ENCODE measurements at regions of chr12 and their contacts with region 1.

Region 1: DNA sequence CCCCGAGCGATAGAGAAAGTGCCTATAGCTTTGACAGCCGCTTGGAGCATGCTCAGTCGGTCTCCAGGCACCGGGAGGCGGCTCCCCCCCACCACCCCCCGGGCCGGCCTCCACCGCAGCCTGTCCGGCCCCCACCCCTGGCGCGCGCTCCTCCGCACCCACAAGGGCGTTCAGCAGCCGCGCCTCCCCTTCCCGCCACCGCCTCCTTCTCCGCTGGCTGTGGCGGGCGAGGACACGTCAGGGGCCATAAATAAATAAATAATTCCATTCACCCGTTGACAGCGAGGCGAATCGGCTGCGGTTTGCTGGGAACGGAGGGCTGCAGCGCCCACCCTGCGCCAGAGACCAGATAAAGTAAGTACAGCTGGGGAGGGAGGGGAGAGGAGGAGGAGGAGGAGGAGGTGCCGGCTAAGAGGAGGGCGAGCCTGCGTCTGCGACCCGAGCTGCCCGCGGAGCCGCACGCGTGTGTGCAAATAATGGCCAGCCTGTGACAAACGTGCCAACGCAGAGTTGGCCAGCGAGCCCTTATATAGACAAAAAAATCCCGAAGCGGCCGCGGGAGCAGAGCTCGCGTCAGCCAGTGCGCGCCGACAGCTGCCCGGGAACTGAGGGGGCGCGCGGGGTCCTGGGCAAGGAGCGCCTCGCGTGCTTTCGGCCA is at the start of gene SLC16A7:
- DNase-seq: peak; percentile 94
- total RNA-seq, gene SLC16A7: 90.1 TPM

Region 2: GRCh38 chr12:59548930-59549329 is 47.1 kb before region 1 on chr12:
- intact Hi-C with region 1: no loop called
- DNase-seq: no peak

Region 3: DNA sequence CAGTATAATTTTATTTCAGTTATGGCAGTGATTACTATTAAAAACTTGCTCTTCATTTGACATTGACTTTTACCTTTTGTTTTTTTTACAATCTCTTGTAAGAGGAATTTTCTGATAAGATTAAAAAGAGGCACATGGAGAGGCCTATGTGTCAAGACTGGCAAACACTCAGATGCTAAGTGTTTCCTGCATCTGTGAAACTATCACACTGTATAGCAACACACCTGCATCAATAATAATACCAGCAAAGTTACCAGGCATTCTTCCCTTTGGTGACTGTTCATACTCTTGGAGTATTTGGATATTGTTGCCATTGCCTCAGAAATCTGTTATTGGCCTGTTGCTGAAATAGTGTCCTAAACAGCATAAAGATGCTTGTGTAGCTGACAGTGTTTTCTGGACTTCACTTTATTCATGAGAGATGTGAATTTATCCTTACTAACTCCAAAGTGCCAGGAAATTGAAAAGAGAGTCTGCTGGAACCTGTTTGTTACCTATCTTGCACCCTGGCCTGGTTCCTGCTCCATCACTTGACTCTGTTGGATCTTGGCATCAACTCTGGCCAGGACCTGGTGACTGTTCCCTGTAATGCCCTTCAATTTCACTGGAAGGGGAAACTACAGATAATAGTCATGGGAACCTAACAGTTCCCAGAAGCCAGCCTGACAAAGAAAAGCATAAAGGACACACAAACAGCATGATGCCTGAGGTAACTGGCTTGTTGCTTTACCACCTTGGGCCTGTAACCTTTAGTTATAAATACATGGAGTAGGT is 19.6 kb after region 1 on chr12:
- intact Hi-C with region 1: loop called (anchors 2 kb)
- DNase-seq: peak; percentile 78

Region 4: DNA sequence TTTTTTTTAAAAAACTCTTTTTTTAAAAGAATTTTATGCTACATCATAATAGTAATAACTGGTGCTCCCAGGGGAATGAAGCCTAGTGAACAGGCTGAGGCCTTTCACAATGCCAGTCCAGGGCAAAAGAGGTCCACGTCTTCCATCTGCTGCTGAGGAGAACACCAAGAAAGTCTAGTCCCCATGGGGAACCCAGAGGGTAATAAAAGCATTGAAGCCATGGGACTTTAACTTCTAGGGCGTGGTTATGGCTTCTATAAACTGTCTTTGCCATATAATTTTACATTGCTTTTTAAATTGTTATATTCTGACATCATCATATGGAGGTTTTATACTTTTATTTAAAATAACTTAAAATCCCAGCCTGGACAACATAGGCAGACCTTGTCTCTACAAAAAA is 64.1 kb after region 1 on chr12:
- intact Hi-C with region 1: loop called (anchors 5 kb)
- DNase-seq: no peak

Region 5: DNA sequence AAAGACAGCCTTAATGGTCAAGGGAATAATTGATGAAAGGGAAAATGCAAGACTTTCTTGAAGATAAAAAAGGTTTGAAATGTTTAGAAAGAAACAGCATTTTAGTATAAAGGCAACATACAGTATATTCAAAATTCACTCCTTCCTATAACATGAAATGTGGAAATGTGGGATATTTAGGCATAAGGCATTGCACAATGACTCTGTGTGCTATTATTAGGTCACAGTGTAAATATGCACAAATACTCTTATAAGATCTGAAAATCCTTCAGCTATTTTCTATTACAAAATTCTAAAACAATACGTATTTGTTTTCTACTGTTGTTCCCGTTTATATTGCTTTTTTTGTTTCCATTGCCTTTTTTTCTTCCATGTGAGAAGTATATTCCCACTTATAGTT is 127.5 kb after region 1 on chr12:
- intact Hi-C with region 1: no loop called
- DNase-seq: no peak

Region 6: GRCh38 chr12:59808317-59808910 is 212.4 kb after region 1 on chr12:
- intact Hi-C with region 1: loop called (anchors 5 kb)
- DNase-seq: no peak

Measured in cardiac septum (tissue), 1 donor.